ENCODE measurements at regions of chr6 and their contacts with region 1.

Region 1: GRCh38 chr6:137707590-137708360 is 159.3 kb upstream of the TNFAIP3 start:
- DNase-seq: peak; percentile 47
- H3K4me3 ChIP-seq: no peak overlapping the region
- H3K27ac ChIP-seq: peak overlapping the region; percentile 11
- H3K27me3 ChIP-seq: no peaks in the 10 kb centered on the region
- CTCF ChIP-seq: peak; percentile 80

Region 2: DNA sequence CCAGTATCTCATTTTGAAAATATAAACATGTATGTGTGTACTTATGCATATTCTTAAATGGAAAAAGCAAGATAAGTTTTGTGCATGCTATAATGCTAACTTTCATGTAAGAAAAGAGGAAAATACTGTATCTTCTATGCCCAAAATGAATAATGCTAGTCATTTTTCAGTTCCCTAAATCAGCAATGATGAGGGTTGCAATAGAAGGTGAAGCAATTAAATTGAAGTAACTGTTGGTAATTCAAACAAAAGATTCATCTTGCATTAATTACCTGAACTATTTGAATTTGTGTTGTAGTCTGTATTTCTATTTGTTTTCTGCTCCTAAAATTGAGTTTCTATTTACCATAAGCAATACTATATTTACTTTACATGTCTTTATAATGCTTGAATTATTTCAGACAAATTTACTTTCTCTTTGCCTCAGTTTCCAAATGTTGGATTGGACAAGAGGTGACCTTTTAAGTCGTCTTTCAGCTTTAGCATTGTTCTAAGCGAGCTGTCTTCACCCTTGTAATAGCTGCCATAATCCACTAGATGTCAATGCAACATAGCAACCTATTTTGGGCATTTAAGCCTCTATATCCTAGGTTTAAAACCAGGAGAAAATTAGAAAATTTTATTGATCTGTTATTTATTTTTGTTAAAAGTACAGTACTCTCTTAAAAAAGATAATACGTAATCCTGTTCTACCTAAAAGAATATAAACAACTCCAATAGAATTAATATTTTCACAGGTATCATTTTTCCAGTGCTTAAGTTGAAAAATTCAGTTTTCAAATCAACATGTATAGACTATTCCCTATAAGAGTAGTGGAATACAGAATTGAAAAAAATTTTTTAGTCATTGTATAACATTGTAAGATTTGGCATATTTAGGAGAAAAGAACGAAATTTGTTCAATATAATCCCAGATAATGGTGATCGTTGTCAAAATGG is 436.3 kb before region 1 on chr6:
- CTCF ChIA-PET with region 1: no interaction called
- POLR2A ChIA-PET with region 1: no interaction called
- DNase-seq: peak; percentile 10
- H3K4me3 ChIP-seq: no peak overlapping the region
- H3K27ac ChIP-seq: no peak overlapping the region
- H3K27me3 ChIP-seq: no peaks in the 10 kb centered on the region
- CTCF ChIP-seq: peak; percentile 96

Region 3: DNA sequence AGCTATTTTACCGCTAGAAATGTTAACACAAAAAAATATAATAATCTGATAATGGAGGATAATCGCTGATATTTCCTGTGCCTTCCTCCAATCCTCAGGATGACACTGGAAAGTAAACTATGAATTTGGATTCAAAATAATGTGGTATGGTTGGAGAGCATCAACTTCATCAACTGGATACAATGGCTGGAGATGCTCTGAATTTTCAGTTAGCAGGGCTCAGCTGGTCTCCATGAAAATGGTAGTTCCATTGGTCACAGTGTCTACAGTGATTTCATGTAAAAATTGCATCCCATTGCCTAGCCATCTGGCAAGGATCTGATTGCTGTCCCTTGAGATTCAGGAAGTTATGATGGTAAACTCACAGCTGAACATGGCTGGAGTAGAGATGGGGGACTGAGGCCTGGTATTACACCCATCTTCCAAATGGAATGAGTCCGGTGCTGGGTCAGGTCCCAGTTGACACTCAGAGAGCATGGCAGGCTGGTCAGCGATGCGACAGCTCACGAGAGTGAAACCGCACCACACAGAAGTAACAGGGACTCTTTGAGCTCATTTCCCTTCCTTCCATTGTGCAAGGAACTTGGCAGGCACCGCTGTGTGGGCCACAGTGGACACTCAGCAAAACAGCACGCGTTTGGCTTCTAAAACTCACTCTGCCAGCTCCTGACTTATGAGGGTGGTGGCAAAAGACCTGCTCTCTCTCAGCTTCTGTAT is 16.9 kb after region 1 on chr6:
- CTCF ChIA-PET with region 1: interaction called, 14 read pairs
- POLR2A ChIA-PET with region 1: no interaction called
- DNase-seq: no peak
- H3K4me3 ChIP-seq: no peak overlapping the region
- H3K27ac ChIP-seq: no peak overlapping the region
- H3K27me3 ChIP-seq: no peaks in the 10 kb centered on the region
- CTCF ChIP-seq: no peak

Region 4: GRCh38 chr6:137866914-137867684 is 159.3 kb after region 1 on chr6 and contains the start of gene TNFAIP3:
- CTCF ChIA-PET with region 1: interaction called, 38 read pairs
- POLR2A ChIA-PET with region 1: interaction called, 4 read pairs
- DNase-seq: peak; percentile 90
- H3K4me3 ChIP-seq: peak within 1 kb of the TSS; percentile 89
- H3K27ac ChIP-seq: peak within 1 kb of the TSS; percentile 57
- H3K27me3 ChIP-seq: no peaks in the 10 kb centered on the region
- CTCF ChIP-seq: peak; percentile 60
- polyA plus RNA-seq, gene TNFAIP3: 16.7 and 19.5 TPM in 2 replicates

Region 5: DNA sequence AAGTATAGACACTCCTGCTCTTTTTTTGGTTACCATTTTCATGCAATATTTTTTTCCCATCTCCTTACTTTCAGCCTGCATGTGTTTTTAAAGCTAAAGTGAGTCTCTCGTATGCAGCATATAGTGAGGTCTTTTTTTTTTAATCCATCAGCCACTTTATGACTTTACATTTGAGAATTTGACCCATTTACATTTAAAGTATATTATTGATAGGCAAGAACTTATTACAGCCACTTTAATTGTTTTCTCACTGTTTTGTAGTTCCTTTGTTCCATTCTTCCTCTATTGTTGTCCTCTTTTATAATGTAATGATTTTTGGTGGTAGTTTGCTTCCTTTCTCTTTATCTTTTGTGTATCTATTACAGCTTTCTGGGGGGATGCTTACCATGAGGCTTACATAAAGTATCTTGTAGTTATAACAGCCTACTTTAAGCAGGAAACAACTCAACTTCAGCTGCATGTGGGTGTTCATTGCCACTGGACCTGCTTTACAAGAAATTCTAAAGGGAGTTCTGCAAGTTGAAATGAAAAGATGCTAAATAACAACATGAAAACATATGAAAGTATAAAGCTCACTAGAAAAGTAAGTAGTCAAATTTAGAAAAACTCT is 231.1 kb after region 1 on chr6:
- CTCF ChIA-PET with region 1: interaction called, 116 read pairs
- POLR2A ChIA-PET with region 1: no interaction called
- DNase-seq: no peak
- H3K4me3 ChIP-seq: no peak overlapping the region
- H3K27ac ChIP-seq: no peak overlapping the region
- H3K27me3 ChIP-seq: no peaks in the 10 kb centered on the region
- CTCF ChIP-seq: no peak

Region 6: DNA sequence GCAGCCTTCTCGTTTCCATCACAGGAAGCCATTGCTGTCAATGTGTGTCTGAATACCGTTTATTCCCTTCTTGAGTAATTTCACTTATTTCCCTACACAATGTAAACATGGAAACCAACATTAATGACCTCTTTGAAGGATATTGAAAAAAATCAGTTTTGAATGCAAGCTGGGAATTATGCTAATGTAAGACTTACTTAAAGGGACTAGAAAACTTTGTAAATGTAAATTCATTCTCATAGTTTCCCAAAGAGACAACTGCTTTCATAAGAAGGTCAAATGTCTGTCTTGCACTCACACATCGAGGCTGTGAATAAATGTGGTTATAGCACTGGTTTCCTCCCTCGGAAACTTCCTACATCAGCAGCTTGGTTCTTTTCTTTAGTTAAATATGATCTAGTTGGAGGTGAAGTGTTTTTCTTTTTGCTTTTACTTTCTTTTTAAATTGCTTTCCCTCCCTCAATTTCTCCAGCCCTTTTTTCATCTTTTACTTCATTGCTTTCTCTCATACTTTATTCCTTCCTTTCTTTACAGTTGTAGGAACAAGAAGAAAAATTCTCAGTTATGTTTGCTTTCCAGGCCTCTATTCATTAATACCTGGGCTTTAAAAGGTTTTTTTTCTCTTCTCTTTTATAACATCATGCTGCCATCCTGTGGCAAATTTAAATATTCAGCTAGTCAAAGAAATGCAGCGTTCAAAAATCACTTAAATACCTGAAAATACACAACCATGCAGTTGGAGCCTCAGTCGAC is 267.6 kb after region 1 on chr6:
- CTCF ChIA-PET with region 1: interaction called, 15 read pairs
- POLR2A ChIA-PET with region 1: no interaction called
- DNase-seq: no peak
- H3K4me3 ChIP-seq: no peak overlapping the region
- H3K27ac ChIP-seq: no peak overlapping the region
- H3K27me3 ChIP-seq: peaks cover 3% of the 10 kb centered on the region
- CTCF ChIP-seq: peak; percentile 21

Region 7: GRCh38 chr6:138001750-138002349 is 294.1 kb after region 1 on chr6:
- CTCF ChIA-PET with region 1: interaction called, 12 read pairs
- POLR2A ChIA-PET with region 1: no interaction called
- DNase-seq: peak; percentile 36
- H3K4me3 ChIP-seq: no peak overlapping the region
- H3K27ac ChIP-seq: no peak overlapping the region
- H3K27me3 ChIP-seq: no peaks in the 10 kb centered on the region
- CTCF ChIP-seq: peak; percentile 93

Region 8: GRCh38 chr6:138007014-138007472 is 299.3 kb after region 1 on chr6:
- CTCF ChIA-PET with region 1: interaction called, 12 read pairs
- POLR2A ChIA-PET with region 1: no interaction called
- DNase-seq: no peak
- H3K4me3 ChIP-seq: no peak overlapping the region
- H3K27ac ChIP-seq: no peak overlapping the region
- H3K27me3 ChIP-seq: no peaks in the 10 kb centered on the region
- CTCF ChIP-seq: peak; percentile 77

Measured in AG04450 (cell line).